ENCODE measurements at regions of chr4 and their contacts with region 1.

Region 1: DNA sequence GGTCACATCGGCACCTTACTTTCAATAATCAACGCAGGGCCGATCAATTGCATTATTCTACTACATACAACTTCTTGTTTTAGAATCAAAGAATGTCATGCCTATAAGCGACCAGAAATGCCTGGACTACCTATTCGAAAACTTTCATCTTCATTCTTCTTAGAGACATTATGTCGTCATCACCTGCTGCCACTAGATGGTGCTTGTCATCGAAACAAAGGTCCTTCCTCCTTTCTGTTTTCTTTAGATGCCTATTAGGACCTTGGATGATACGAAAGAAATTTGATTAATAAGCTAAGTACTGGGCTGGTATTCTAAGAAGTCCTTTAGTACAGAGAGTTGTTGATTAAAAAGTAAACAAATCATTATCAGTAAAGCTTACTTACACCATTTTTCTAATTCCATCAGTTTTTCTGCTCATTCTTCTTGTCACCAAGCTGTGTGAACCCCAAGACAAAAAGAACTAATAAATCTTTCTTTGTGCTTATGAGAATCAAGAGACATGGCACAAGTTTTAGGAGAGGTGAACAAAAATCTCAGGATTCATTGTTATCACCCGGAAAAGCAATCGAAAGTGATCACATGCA is 154.5 kb upstream of the SLC4A4 start:
- DNase-seq: peak; percentile 37
- H3K4me3 ChIP-seq: no peak overlapping the region
- H3K27ac ChIP-seq: no peak overlapping the region
- H3K4me1 ChIP-seq: peaks cover 4% of the 10 kb centered on the region
- H3K27me3 ChIP-seq: peaks cover 25 to 49% of the 10 kb centered on the region in 2 experiments
- CTCF ChIP-seq: peak; percentile 46 to 52
- POLR2A ChIP-seq: no peak

Region 2: GRCh38 chr4:70651864-70652506 is 532.3 kb before region 1 on chr4:
- CTCF ChIA-PET with region 1: no interaction called
- POLR2A ChIA-PET with region 1: no interaction called
- dilution Hi-C with region 1: no loop called
- intact Hi-C with region 1: loop called (anchors 10 kb)
- DNase-seq: peak; percentile 55
- H3K4me3 ChIP-seq: no peak overlapping the region
- H3K27ac ChIP-seq: no peak overlapping the region
- H3K4me1 ChIP-seq: peaks cover 12% of the 10 kb centered on the region
- H3K27me3 ChIP-seq: peaks cover 0 to 8% of the 10 kb centered on the region in 2 experiments
- CTCF ChIP-seq: peak; percentile 23 to 29
- POLR2A ChIP-seq: no peak

Measured in endothelial cell of umbilical vein (primary cell).